CD14-positive monocyte (primary cell): ENCODE measurements at regions of chr9 and their contacts with region 1.

Region 1: DNA sequence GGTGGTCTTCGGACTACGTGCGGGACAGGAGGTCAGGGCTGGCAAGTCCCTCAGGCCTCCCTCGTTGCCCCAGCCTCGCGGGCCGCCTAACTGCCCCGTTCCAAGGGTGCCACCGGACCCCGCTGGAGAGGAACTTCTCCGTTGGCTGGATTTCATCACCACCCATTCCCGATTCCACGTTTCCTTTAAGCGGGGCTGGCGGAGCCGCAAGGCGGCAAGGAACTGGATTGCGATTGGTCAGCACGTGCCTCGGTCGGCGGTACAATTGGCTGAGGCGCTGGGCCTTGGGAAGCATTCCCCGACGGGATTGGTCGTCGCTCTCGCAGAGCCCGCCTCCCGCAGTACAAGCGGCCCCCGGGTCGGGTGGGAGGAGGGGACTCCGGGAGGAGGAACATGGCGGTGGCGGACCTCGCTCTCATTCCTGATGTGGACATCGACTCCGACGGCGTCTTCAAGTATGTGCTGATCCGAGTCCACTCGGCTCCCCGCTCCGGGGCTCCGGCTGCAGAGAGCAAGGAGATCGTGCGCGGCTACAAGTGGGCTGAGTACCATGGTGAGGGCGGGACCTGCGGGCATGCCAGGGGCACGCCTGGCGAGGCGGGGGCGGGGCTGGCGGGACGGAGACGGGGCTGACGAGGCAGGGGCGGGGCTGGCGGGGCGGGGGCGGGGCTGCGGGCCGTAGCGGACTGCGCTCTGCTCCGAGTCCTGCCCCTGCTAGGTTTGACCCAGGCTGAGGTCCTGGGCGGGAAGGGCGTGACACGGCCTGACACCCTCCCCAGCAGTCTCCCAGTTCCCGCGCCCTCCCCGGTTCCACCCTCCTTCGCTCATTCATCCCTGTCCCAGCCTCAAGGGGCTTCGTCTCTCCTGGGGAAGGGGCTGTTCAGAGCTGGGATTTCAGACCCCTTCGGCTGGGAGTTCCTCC is at the start of gene PHPT1:
- DNase-seq: peak; percentile 98
- H3K4me3 ChIP-seq: peak within 1 kb of the TSS; percentile 74 to 93 (median 76)
- H3K4me3 Mint-ChIP-seq: peak within 1 kb of the TSS; percentile 92 to 97
- H3K27ac ChIP-seq: peak within 1 kb of the TSS; percentile 31 to 73
- H3K27ac Mint-ChIP-seq: peak within 1 kb of the TSS; percentile 84 to 97 (median 96)
- H3K4me1 ChIP-seq: peaks cover 21 to 34% of the 10 kb centered on the region in 2 donors
- H3K4me1 Mint-ChIP-seq: peaks cover 20% of the 10 kb centered on the region
- H3K27me3 ChIP-seq: peaks cover 12 to 24% of the 10 kb centered on the region in 2 donors
- H3K27me3 Mint-ChIP-seq: peaks cover 24 to 33% (median 24%) of the 10 kb centered on the region in 3 donors
- CTCF ChIP-seq: no peak
- polyA plus RNA-seq, gene PHPT1: 70.0 to 163 (median 94.3) TPM

Region 2: DNA sequence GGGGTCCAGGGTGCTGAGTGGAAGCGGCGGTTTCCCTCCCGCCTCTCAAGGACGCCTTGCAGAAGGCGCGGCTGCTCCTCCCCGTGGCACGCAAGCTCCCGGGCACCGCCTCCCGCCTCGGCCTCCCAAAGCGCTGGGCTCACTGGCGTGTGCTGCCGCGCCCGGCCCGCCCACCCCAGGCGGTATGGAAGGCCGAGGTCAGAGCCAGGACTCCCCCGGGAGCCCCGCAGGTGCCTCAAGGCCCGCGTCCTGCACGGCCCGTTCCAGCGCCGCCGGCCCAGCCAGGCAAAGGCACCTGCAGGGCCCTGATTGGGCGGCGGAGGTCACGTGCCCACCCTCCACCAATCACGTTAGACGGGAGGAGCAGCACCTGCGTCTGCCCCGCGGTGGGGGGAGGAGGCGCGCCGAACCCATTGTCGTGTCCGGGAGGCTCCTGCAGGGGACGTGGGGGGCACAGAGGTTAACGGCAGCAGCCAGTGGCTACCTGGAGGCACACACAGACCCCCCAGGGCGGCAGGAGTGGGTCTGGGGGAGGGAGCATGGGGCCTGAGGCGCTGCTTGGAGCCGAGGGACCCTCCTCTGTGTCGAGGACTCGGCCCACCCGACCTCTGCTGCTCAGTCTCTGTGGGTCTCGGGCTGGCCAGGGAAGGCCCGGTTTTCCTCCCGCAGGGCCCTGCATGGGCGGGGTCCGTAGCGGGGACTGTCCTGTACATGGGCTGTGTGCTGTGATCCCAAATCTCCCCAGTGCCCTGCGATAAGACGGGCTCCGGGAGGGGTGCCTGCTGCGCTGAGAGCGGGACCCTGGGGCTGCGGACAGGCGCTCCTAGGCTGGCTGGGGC is 100.7 kb after region 1 on chr9:
- intact Hi-C with region 1: loop called (anchors 5 to 10 kb)
- DNase-seq: peak; percentile 83 to 88 (median 86)
- H3K4me3 ChIP-seq: peak overlapping the region; percentile 41 to 83 (median 75)
- H3K4me3 Mint-ChIP-seq: peak overlapping the region; percentile 80 to 90
- H3K27ac ChIP-seq: peak overlapping the region in 1 of 2 donors; percentile 84
- H3K27ac Mint-ChIP-seq: peak overlapping the region in 5 of 7 donors; percentile 59 to 80 (median 74)
- H3K4me1 ChIP-seq: peaks cover 13 to 22% of the 10 kb centered on the region in 2 donors
- H3K4me1 Mint-ChIP-seq: peaks cover 9% of the 10 kb centered on the region
- H3K27me3 ChIP-seq: no peaks in the 10 kb centered on the region
- H3K27me3 Mint-ChIP-seq: peaks cover 0 to 5% (median 3%) of the 10 kb centered on the region in 3 donors
- CTCF ChIP-seq: no peak